Panc1 (cell line): ENCODE measurements at regions of chr2 and their contacts with region 1.

Region 1: DNA sequence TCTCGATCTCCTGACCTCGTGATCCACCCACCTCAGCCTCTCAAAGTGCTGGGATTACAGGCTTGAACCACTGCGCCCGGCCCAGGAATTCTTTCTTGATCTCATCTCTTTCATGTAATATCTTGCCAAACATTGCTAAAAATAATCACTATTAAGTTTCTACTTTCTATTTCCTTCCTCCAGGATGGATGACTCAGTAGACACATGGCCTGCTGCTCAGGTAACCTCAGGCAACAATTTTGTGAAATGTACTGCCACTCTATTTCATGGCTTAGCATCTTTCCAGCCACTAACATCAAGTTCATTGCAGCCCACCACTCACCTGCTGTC is 11.1 kb upstream of the SUMO1 start:
- DNase-seq: no peak
- ATAC-seq: no peak
- H3K4me3 ChIP-seq: no peak overlapping the region
- H3K27ac ChIP-seq: no peak overlapping the region
- H3K4me1 ChIP-seq: no peaks in the 10 kb centered on the region
- H3K27me3 ChIP-seq: no peaks in the 10 kb centered on the region
- CTCF ChIP-seq: no peak

Region 2: DNA sequence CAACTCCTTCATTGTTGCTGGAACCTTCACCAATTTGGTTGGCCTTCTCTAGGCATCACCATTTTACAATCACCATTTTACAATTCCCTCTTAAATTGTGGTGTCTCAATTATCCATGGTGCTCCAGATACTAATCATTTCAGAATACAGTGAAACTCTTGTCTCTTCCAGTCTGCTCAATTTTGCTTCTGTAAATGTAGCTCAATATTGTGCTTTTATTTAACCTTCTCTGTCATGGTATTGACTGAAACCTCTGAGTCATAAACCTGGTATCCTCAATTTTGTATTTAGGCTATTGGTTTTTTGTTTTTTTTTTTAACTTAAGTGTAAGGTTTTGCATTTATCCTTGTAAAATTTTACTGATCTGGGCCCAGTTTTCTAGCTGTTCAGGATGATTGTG is 781.8 kb before region 1 on chr2:
- CTCF ChIA-PET with region 1: interaction called, 4 read pairs
- POLR2A ChIA-PET with region 1: interaction called, 10 read pairs
- in situ Hi-C with region 1: no loop called
- intact Hi-C with region 1: no loop called
- DNase-seq: no peak
- ATAC-seq: no peak
- H3K4me3 ChIP-seq: no peak overlapping the region
- H3K27ac ChIP-seq: no peak overlapping the region
- H3K4me1 ChIP-seq: no peaks in the 10 kb centered on the region
- H3K27me3 ChIP-seq: no peaks in the 10 kb centered on the region
- CTCF ChIP-seq: no peak

Region 3: GRCh38 chr2:202135091-202135874 is 114.2 kb before region 1 on chr2:
- CTCF ChIA-PET with region 1: no interaction called
- POLR2A ChIA-PET with region 1: interaction called, 17 read pairs
- in situ Hi-C with region 1: no loop called
- intact Hi-C with region 1: no loop called
- DNase-seq: no peak
- ATAC-seq: peak; percentile 58
- H3K4me3 ChIP-seq: no peak overlapping the region
- H3K27ac ChIP-seq: no peak overlapping the region
- H3K4me1 ChIP-seq: peaks cover 4% of the 10 kb centered on the region; the same call in 1 of the 2 replicates
- H3K27me3 ChIP-seq: no peaks in the 10 kb centered on the region
- CTCF ChIP-seq: no peak

Region 4: GRCh38 chr2:202361108-202361507 is 111.6 kb after region 1 on chr2:
- CTCF ChIA-PET with region 1: no interaction called
- POLR2A ChIA-PET with region 1: no interaction called
- in situ Hi-C with region 1: no loop called
- intact Hi-C with region 1: no loop called
- DNase-seq: no peak
- ATAC-seq: no peak
- H3K4me3 ChIP-seq: no peak overlapping the region
- H3K27ac ChIP-seq: no peak overlapping the region
- H3K4me1 ChIP-seq: no peaks in the 10 kb centered on the region
- H3K27me3 ChIP-seq: no peaks in the 10 kb centered on the region
- CTCF ChIP-seq: no peak